Heart right ventricle (tissue), 16 donors: ENCODE measurements at regions of chr14 and their contacts with region 1.

Region 1: GRCh38 chr14:75702616-75703261 is 41.7 kb downstream of the TTLL5 start:
- DNase-seq: no peak
- ATAC-seq: peak; percentile 31 to 71 (median 66)
- H3K4me3 ChIP-seq: no peak overlapping the region
- H3K27ac ChIP-seq: peak overlapping the region in 7 of 10 donors; percentile 9 to 68 (median 47)
- H3K4me1 ChIP-seq: peaks cover 0 to 29% (median 15%) of the 10 kb centered on the region in 9 donors
- H3K27me3 ChIP-seq: no peaks in the 10 kb centered on the region
- CTCF ChIP-seq: no peak

Region 2: GRCh38 chr14:75615200-75615599 is 87.5 kb before region 1 on chr14:
- intact Hi-C with region 1: no loop called
- DNase-seq: peak in 1 of 2 donors; percentile 18
- ATAC-seq: peak; percentile 36 to 69 (median 62)
- H3K4me3 ChIP-seq: no peak overlapping the region
- H3K27ac ChIP-seq: peak overlapping the region in 1 of 10 donors; percentile 89
- H3K4me1 ChIP-seq: peaks cover 0 to 57% (median 17%) of the 10 kb centered on the region in 9 donors
- H3K27me3 ChIP-seq: no peaks in the 10 kb centered on the region
- CTCF ChIP-seq: no peak

Region 3: DNA sequence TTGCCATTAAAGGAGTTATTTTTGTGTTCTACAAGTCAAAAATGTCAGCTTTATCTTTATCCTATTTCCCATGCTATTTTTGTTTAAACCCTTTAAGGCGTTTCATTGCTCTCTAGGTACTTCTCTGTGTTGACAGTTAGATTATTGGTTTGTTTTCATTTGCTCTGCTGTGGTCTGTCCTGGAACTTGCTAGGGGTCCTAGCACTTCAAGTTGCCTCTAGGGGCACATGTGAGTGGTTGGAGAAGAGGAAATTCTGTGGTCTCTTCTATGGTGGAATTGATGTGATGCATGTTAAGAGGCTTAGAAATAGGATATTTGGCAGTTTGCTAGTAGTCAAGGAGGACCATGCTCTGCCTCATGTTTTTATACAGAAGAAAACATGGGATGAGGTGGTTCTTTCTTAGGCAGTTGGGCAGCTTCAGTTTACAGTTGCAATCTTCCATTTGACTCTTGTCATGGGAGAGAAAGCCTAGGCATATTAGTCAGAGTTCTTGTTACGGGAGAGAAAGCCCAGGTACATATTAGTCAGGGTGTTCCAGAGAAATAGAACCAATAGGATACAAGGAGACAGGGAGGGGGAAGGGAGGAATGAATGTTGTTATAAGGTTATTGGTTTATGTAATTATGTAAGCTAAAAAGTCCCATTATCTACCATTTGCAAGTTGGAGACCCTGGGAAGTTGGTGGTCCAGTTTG is 27.3 kb before region 1 on chr14:
- intact Hi-C with region 1: loop called in 1 of 10 experiments (anchors 1 kb)
- DNase-seq: no peak
- ATAC-seq: no peak
- H3K4me3 ChIP-seq: no peak overlapping the region
- H3K27ac ChIP-seq: no peak overlapping the region
- H3K4me1 ChIP-seq: no peaks in the 10 kb centered on the region
- H3K27me3 ChIP-seq: no peaks in the 10 kb centered on the region
- CTCF ChIP-seq: no peak